Activated CD8-positive, alpha-beta T cell treated with anti-CD3 and anti-CD28 coated beads, Interleukin-2, amount 10 ng/mL, durations not matched to agents 7 days and 5 days (primary cell): ENCODE measurements at regions of chr1 and their contacts with region 1.

Region 1: DNA sequence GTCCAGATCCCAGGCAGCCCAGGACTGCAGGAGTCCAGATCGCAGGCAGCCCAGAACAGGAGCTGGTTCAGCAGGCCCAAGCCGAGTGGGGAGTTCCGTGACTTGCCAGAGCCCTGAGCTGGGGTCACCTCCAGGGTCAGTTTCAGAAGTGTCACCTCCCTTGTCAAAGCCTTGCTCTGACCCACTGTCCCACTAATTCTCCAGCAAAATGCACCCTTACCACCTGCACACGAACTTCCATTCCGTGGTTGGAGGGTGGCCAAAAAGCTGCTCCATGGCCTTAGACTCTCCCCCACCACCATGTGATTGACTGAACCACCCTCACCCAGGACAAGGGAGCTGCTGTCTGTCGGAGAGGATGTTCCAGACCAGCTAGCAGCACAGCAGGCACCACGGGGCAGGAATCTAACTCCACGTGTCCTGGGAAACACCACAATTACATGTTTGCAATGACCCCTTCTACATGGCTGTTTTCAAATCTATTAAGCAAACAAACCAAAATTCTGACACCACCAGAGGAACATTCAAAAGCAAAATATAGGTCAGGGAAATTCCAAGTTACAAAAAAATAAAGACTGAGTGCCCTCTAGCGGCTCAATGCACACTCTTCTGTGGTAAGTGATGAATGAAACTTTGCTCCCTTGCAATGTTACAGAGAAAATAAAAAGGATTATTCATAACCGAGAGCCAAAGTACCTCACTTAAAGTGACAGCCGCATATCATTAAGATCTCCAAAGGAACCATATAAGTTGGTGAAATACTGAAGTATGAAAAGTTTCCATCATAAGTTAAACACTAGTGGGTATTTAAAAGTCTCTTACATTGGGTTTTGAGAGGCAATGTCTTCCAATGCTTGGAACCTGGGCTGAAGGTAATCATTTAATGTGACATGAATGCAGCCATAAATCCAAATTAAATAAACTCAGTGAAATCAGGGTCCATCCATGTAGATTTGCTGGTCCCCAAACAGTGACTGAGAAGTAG is 76.3 kb downstream of the NPHP4 start:
- DNase-seq: peak; percentile 37
- ATAC-seq: no peak
- H3K4me3 Mint-ChIP-seq: no peak overlapping the region
- H3K27ac Mint-ChIP-seq: no peak overlapping the region
- H3K4me1 Mint-ChIP-seq: no peaks in the 10 kb centered on the region
- H3K27me3 Mint-ChIP-seq: no peaks in the 10 kb centered on the region

Region 2: GRCh38 chr1:5830771-5831599 is 84.9 kb before region 1 on chr1:
- CTCF ChIA-PET with region 1: no interaction called
- POLR2A ChIA-PET with region 1: no interaction called
- DNase-seq: no peak
- ATAC-seq: no peak
- H3K4me3 Mint-ChIP-seq: no peak overlapping the region
- H3K27ac Mint-ChIP-seq: no peak overlapping the region
- H3K4me1 Mint-ChIP-seq: no peaks in the 10 kb centered on the region
- H3K27me3 Mint-ChIP-seq: no peaks in the 10 kb centered on the region

Region 3: GRCh38 chr1:5877761-5878530 is 37.9 kb before region 1 on chr1:
- CTCF ChIA-PET with region 1: no interaction called
- POLR2A ChIA-PET with region 1: no interaction called
- DNase-seq: no peak
- ATAC-seq: no peak
- H3K4me3 Mint-ChIP-seq: no peak overlapping the region
- H3K27ac Mint-ChIP-seq: no peak overlapping the region
- H3K4me1 Mint-ChIP-seq: no peaks in the 10 kb centered on the region
- H3K27me3 Mint-ChIP-seq: no peaks in the 10 kb centered on the region

Region 4: DNA sequence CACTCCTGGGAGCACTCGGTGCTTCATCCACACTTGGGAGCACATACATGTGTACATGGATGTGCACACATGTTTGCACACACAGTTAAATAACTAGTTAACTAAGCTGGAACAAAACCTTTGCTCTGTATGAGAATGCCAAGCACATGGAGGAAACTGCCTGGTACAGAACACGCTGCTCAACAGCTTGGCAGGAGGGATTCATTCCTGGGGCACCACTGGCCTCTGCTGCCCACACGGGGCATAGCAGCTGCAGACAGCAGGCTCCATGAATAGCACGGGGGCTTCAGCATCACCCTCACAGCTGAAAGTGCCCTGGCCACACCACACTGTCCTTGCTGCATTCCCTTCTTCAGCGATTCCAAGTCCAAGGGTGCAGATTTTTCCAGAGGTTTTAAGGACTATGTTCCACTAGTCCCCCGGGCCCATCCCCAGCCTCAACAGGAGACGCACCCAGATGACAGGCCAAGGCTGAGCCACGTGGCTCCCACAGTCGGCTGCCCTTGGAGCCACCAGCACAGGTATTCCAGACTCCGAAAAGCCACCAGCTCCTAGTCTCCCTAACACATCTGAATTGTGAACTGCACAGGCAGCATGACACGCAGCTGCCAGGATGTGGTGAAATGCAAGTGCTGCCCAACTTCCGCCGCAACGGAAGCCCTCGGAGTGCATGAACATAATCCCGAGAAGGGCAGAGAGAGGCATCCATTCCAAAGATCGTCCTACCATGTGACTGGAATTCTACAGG is 59.4 kb after region 1 on chr1:
- CTCF ChIA-PET with region 1: interaction called, 10 read pairs
- POLR2A ChIA-PET with region 1: no interaction called
- DNase-seq: peak; percentile 59
- ATAC-seq: peak; percentile 63
- H3K4me3 Mint-ChIP-seq: no peak overlapping the region
- H3K27ac Mint-ChIP-seq: no peak overlapping the region
- H3K4me1 Mint-ChIP-seq: peaks cover 6% of the 10 kb centered on the region
- H3K27me3 Mint-ChIP-seq: no peaks in the 10 kb centered on the region

Region 5: GRCh38 chr1:5991381-5992025 is 75.6 kb after region 1 on chr1:
- CTCF ChIA-PET with region 1: no interaction called
- POLR2A ChIA-PET with region 1: no interaction called
- DNase-seq: peak; percentile 49
- ATAC-seq: peak; percentile 9
- H3K4me3 Mint-ChIP-seq: peak overlapping the region; percentile 96
- H3K27ac Mint-ChIP-seq: peak overlapping the region; percentile 83
- H3K4me1 Mint-ChIP-seq: peaks cover 36% of the 10 kb centered on the region
- H3K27me3 Mint-ChIP-seq: no peaks in the 10 kb centered on the region